Cardiac septum (tissue), 1 donor: ENCODE measurements at regions of chr4 and their contacts with region 1.

Region 1: DNA sequence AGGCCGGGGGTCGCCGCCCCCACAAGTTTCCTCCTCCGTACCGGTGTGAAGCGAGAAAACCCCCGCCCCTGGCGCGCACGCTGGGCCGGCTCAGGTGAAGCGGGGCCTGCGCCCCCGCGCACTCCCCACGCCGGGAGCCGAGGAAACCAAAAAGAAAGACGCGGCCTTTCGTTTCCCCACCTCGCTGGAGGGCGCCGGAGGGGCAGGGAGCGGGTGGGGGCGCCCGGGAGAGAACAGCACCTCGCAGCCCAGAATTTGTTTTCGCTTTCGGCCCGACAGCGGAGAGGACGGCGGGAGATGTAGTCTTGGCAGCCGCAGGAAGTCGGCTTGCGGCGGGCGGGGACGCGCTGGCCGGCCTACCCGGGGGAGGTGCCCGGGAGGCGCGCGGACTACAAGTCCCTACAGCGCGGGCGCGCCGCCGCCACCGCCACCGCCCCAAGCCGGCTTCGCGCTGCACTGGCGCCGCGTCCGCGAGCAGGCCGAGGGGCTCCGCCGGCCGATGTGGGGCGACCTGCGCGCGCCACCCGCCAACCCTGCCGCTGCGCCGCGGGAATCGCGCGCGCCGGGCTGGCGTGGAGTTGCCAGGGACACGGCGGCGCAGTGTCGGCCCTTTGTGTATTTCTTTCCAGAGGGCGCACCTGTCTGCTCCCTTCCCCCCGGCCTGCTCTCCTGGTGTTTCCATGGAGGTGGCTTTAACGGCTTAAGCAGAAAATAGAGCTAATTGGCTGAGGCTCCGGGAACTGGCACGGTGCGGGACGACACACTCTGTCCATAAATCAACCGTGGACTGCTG is at the start of gene OTUD4:
- DNase-seq: peak; percentile 99
- total RNA-seq, gene OTUD4: 26.7 TPM

Region 2: GRCh38 chr4:144948009-144948408 is 232.5 kb before region 1 on chr4:
- intact Hi-C with region 1: no loop called
- DNase-seq: no peak

Region 3: DNA sequence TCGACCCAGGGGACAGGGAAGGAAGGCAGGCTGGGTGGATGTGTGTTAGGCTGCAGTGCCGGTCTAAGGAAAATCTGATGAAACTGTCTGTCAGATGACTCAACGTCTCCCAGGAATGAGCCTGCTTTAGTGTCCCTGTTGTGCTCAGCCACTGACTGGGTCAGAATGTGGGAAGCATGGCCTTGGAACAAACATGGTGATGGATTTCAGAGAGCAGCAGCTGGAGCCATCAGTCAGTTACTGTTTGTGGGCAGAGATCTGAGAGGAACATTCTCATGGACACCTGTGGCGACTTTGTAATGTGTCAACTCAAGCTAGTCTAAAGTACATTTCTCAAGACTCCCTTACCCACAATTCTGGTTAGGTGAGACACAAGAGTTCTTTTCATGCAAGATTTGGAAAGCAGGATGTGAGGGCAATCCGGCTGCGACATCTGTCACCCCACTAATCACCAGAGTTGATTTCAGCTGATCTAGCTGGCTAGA is 145.7 kb before region 1 on chr4:
- intact Hi-C with region 1: no loop called
- DNase-seq: no peak

Region 4: GRCh38 chr4:145097821-145098674 is 82.4 kb before region 1 on chr4 and contains the starts of genes ABCE1 and ANAPC10:
- intact Hi-C with region 1: loop called (anchors 5 kb)
- DNase-seq: peak; percentile 94
- total RNA-seq, gene ABCE1: 39.5 TPM
- total RNA-seq, gene ANAPC10: 20.8 TPM

Region 5: DNA sequence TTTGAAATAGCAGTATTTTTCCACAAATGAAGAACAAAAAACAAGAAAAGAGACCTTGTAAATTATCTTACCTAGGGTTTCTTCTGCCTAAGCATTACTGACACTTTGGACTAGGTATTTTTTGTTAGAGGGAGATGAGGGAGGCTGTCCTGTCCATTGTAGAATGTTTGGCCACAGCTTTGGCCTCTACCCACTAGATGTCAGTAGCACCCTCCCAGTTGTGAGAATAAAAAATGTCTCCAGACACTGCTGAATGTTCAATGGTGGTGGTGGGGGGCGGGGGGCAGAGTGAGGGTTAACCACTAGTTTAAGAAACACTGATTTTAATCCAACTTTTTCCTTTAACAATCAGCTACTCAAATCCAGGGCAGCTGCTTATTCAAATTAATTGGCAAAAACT is 25.9 kb before region 1 on chr4:
- intact Hi-C with region 1: loop called (anchors 2 kb)
- DNase-seq: no peak

Region 6: GRCh38 chr4:145481164-145481941 is 300.9 kb after region 1 on chr4 and contains the start of gene SMAD1:
- intact Hi-C with region 1: loop called (anchors 5 kb)
- DNase-seq: peak; percentile 91
- total RNA-seq, gene SMAD1: 10.8 TPM

Region 7: DNA sequence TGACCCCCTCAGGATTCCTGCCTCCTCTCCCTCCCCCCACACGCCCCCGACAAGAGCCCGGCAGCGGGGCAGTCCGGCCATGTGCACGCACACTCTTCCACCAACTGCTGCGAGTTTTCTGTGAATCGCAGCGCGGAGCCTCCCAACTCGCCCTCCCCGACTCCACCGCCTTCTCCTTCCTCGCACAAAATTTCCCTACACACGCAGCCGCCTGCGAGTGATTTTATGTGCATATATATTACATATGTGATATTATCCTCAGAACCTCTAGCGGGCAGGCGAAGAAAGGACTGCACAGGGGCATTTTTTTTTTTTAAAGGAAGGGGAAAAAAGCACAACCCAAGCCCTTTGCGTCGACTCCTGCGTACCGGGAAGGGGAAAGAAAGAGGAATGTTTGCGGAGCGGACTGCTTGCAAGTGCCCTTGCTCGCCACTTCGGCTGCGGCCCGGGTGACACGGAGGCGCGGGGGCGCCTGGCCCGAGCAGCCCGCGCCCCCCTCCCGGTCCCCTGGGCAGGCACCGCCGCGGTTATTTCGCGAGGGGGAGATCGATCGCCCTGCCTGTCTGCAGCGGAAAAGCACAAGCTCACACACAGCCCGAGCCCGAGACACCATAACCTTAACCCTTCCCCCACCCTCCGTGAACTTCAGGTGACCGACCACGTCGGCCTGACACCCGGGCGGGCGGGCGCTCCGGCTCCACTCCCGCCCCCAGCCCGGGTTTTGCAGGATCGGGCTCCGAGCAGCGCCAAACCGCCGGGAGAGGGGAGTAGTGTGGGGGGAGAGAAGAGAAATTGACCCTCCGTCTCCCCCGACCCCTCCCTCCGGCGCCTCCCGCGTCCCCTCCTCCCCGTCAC is 755.9 kb after region 1 on chr4:
- intact Hi-C with region 1: loop called (anchors 10 kb)
- DNase-seq: peak; percentile 82